ENCODE measurements at regions of chr14 and their contacts with region 1.

Region 1: GRCh38 chr14:105059035-105059924 is 6.0 kb downstream of the GPR132 start:
- DNase-seq: peak; percentile 87
- H3K4me3 Mint-ChIP-seq: peak overlapping the region; percentile 28
- H3K27ac Mint-ChIP-seq: peak overlapping the region; percentile 94
- H3K4me1 Mint-ChIP-seq: peaks cover 57% of the 10 kb centered on the region
- H3K27me3 Mint-ChIP-seq: no peaks in the 10 kb centered on the region

Region 2: DNA sequence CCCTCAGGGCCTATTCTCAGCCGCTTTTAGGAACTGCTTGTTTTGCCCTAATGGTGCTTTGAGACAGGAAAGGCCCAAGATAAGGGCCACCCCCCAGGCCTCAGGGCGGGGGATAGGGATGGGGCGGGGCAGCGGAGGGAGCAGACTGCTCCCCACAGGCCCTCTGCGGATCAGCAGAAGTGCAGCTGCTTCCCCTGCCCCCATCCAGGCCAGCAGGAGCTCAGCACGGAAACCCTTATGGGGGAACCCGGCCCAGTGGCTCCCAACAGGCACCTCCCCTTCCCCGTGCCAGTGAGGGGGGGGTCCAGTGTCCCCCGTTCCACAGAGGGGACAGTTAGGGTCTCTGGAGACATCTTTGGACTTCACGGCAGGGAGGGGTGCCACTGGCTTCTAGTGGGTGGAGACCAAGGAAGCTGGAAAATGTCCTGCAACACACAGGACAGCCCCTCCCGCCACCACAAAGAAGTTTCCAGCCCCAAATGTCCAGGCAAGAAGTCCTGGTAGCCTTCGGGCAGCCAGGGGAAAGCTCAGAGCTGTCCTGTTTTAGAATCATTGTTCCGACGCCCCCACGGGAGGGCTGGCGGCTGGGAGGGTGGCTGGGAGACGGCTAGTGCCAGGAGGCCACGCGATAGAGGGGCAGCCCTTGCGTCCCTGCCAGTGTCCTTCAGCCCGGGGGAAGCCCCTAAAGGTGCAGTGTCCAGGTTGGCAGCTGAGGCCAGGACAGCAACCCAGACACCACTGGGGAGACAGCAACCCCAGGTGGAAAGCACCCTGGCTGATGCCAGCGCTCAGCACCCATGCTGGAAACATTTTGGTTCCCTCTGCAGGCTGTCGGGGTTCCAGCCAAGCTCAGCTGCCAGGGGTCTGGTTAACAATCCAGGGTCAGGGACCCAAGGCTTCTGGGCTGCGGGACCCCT is 16.4 kb after region 1 on chr14:
- CTCF ChIA-PET with region 1: interaction called, 12 read pairs
- intact Hi-C with region 1: loop called (anchors 1 kb)
- DNase-seq: peak; percentile 79
- H3K4me3 Mint-ChIP-seq: no peak overlapping the region
- H3K27ac Mint-ChIP-seq: peak overlapping the region; percentile 30
- H3K4me1 Mint-ChIP-seq: peaks cover 32% of the 10 kb centered on the region
- H3K27me3 Mint-ChIP-seq: no peaks in the 10 kb centered on the region

Region 3: DNA sequence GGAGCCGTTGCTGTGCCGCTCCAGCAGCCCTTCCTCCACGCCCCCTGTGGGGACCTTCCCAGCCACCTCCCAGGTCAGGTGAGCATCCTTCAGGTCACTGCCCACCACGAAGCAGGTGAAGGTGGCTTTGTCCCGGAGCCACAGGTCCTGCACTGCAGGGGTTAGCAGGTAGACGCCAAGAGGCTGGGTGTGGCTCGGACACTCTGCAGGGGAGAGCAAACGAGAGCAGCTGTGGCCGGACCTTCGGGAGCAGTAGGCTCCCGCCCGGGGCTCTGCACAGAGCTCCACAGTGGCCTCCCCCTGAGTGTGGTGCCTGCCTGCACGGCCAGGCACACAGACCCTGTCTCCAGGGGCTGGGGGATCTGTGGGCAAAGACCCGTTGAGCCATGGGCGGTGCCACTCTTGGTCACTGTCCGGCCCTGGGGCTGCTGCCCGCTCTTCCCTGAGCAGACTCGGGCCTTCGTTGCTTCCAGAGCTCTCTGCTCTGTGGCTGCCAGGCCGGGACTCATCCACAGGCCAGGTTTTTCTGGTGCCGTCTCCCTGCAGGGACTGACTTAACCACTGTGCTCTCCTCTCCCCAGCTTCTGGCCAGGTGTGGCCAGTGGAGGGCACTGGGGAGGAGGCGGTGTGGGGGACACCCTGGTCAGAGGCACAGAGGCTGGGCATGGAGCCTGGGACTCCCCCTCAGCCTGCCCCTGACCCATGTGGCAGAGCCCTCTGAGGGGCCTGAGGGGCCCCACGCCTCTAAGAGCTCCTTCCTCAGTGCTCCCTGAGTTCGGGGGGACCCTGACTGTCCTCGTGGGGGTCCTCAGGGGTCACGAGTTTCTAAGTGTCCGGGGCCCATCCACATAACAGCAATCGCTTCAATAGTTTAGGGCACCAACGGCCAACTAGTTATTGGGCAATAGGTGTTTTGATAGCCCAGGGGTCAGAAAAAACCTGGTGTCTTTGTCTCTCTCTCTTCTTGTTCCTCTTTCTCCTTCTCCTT is 782.0 kb after region 1 on chr14:
- CTCF ChIA-PET with region 1: no interaction called
- intact Hi-C with region 1: no loop called
- DNase-seq: no peak
- H3K4me3 Mint-ChIP-seq: no peak overlapping the region
- H3K27ac Mint-ChIP-seq: no peak overlapping the region
- H3K4me1 Mint-ChIP-seq: no peaks in the 10 kb centered on the region
- H3K27me3 Mint-ChIP-seq: no peaks in the 10 kb centered on the region

Measured in activated naive CD4-positive, alpha-beta T cell treated with anti-CD3 and anti-CD28 coated beads for 36 hours (primary cell).